A549 (cell line): ENCODE measurements at regions of chr5 and their contacts with region 1.

Region 1: DNA sequence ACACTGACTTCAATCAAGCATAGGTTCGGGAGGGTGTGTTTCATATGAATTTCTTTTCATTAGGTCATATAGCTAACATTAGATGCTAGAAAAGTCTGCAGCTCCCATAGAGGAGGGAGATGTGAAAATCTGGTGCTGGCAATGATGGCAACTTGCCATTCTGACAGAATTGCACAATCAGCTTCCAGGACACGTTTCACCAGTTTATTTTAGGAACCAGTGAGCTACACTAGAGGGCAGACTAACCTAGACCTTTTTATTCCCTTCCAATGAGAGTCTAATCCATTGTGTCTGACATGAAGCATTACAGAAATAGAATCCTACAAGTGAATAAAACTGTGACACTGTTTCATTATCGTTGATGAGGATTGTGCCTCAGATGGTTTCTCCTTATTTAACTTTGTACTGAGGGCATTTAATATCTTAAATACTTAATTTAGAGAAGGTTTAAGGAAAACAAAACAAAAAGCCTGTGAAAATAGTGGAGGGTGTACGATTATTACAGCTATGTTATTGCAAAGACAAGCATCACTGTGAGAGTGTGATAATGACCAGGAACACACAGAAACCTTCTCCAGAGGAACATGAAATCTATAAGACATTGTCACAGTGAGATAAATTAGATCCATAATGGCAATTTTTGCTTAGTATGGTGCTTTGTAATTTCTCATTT is 363.3 kb upstream of the RPS23 start:
- DNase-seq: peak; percentile 69 to 76
- ATAC-seq: peak; percentile 90 to 93
- H3K4me3 ChIP-seq: no peak overlapping the region
- H3K27ac ChIP-seq: 0 out of 6 replicates have a peak overlapping the region, but pooled peaks of 1 of the 2 experiments have one; percentile 5
- H3K4me1 ChIP-seq: peaks cover 8% of the 10 kb centered on the region; the same call in 2 of the 3 replicates
- CTCF ChIP-seq: peak; percentile 83
- EP300 ChIP-seq: no peak
- POLR2A ChIP-seq: no peak
- RAD21 ChIP-seq: peak; percentile 78 to 85

Region 2: DNA sequence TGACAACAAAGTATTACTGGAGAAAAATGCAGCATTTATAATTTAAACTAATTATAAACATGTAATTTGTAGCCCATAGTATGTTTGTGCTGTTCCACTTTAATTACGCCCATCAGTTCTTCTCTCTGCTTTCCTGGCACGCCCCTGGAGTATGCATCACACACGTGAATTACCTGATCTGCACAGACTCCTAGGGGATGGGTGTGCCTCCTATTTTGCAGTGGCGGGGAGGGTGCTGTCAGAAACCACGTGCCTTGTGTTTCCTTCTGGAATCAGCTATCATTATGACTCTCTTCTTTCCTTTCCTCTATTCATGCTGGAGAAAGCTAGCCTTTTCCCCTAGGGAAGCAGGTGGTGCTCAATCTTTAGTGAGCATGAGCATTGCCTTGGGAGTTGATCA is 406.6 kb before region 1 on chr5:
- CTCF ChIA-PET with region 1: no interaction called
- POLR2A ChIA-PET with region 1: no interaction called
- DNase-seq: no peak
- ATAC-seq: no peak
- H3K4me3 ChIP-seq: no peak overlapping the region
- H3K27ac ChIP-seq: no peak overlapping the region
- H3K4me1 ChIP-seq: no peaks in the 10 kb centered on the region
- CTCF ChIP-seq: no peak
- EP300 ChIP-seq: no peak
- POLR2A ChIP-seq: no peak
- RAD21 ChIP-seq: no peak

Region 3: DNA sequence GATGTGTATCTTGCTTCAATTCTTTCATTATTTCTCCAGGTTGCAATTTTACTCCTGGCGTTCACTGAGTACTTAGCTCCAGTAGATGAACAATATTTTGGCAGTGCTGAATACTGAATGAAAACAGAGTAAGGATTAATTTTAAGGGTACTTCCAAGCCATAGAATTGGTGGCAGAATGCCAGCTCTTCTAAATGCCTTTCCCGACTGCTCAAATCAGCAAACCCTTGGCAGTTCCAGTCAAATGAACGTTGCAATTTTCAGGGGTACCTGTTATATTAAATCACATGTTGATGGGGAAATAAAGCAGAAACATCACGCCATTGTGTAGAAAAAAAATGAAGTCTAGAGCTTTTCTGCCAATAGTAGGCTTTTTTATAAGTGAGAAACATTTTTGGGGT is 80.9 kb before region 1 on chr5:
- CTCF ChIA-PET with region 1: no interaction called
- POLR2A ChIA-PET with region 1: no interaction called
- DNase-seq: no peak
- ATAC-seq: no peak
- H3K4me3 ChIP-seq: no peak overlapping the region
- H3K27ac ChIP-seq: no peak overlapping the region
- H3K4me1 ChIP-seq: no peaks in the 10 kb centered on the region
- CTCF ChIP-seq: no peak
- EP300 ChIP-seq: no peak
- POLR2A ChIP-seq: no peak
- RAD21 ChIP-seq: no peak

Region 4: DNA sequence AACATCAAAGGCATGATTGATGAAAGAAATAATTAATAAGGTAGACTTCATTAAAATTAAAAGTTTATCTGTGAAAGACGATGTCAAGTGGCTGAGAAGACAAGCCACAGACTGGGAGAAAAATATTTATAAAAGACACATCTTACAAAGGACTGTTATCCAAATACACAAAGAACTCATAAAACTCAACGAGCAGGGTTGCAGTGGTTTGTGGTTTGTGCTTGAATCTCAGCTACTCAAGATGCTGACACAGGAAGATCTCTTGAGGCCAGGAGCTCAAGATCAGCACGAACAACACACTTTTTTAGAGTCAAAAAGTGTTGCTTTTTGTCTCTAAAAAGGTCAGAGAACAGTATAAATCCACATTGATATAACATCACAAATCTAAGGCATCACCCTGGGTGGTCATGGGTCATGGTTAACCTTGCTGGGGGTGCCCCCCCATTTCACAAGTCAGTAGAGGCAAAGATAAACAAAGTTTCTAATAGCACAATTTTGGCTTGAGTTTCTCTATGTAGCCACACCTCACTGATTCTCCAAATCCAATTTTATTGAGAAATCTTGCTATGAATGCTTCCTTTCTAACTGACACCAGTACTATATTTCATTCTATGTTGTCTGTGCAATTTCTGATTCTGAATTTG is 20.4 kb before region 1 on chr5:
- CTCF ChIA-PET with region 1: no interaction called
- POLR2A ChIA-PET with region 1: no interaction called
- DNase-seq: no peak
- ATAC-seq: no peak
- H3K4me3 ChIP-seq: no peak overlapping the region
- H3K27ac ChIP-seq: no peak overlapping the region
- H3K4me1 ChIP-seq: no peaks in the 10 kb centered on the region
- CTCF ChIP-seq: no peak
- EP300 ChIP-seq: no peak
- POLR2A ChIP-seq: no peak
- RAD21 ChIP-seq: no peak

Region 5: DNA sequence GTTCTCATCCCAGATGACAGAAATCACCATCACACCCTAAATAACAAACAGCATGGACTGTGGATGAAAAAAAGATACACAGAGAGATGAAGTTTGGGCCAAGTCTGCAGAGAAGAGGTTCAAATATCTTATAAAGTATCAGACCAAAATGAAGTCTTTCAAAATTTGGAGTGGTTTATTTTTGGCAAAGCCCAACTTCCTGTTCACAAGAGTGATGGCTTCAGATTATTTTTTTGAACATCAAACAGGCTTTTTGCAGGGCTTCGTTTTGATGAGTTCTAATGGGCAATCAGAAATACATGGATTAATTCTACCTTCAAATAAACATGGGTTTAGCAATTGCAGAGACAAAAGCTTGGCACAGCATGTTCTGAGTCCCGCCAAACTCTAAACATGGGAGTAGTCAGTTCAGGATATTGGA is 14.9 kb after region 1 on chr5:
- CTCF ChIA-PET with region 1: interaction called, 11 read pairs
- POLR2A ChIA-PET with region 1: no interaction called
- DNase-seq: no peak
- ATAC-seq: no peak
- H3K4me3 ChIP-seq: no peak overlapping the region
- H3K27ac ChIP-seq: no peak overlapping the region
- H3K4me1 ChIP-seq: no peaks in the 10 kb centered on the region
- CTCF ChIP-seq: no peak
- EP300 ChIP-seq: no peak
- POLR2A ChIP-seq: no peak
- RAD21 ChIP-seq: no peak

Region 6: GRCh38 chr5:83430130-83431010 is 788.9 kb after region 1 on chr5:
- CTCF ChIA-PET with region 1: interaction called, 11 read pairs
- POLR2A ChIA-PET with region 1: no interaction called
- DNase-seq: peak; percentile 14 to 64
- ATAC-seq: peak; percentile 74 to 96; a peak in 4 of 6 replicates
- H3K4me3 ChIP-seq: no peak overlapping the region
- H3K27ac ChIP-seq: no peak overlapping the region
- H3K4me1 ChIP-seq: no peaks in the 10 kb centered on the region
- CTCF ChIP-seq: peak; percentile 84
- EP300 ChIP-seq: no peak
- POLR2A ChIP-seq: no peak
- RAD21 ChIP-seq: peak; percentile 76 to 86